ENCODE measurements at regions of chr18 and their contacts with region 1.

Region 1: GRCh38 chr18:45967007-45967706 is at the start of gene EPG5:
- DNase-seq: peak; percentile 95 to 97
- H3K4me3 ChIP-seq: peak within 1 kb of the TSS; percentile 70 to 78
- H3K27ac ChIP-seq: peak within 1 kb of the TSS; percentile 62 to 77
- H3K4me1 ChIP-seq: peaks cover 0 to 22% (median 15%) of the 10 kb centered on the region in 4 donors
- H3K27me3 ChIP-seq: no peaks in the 10 kb centered on the region
- CTCF ChIP-seq: no peak

Region 2: DNA sequence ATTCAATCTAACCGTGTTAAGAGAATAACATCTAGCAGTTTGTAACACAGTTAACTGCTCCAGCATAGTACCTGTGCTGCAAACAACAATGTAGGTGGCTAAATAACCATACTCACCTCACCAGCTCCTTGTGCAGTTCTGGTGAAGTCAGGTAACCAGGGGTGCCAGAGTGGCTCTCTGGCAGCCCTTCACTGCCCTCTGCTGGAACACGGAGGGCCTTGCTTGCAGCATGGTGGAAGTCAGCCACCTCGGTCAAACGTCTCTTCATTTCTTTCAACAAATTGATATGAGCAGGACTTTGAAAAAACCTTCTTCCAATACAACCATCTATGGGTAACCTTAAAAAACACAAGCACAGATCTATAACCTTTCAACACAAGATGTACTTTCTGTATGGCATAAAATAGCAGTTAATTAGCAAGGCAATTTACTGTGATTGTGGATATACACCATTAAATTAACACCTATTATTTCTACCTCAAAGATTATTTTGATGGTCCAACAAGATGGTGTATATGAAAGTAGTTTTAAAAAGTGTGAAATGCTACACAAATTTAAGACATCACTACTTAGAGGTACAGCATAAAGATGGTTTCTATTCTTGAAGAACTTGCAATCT is 56.6 kb before region 1 on chr18:
- intact Hi-C with region 1: no loop called
- DNase-seq: no peak
- H3K4me3 ChIP-seq: no peak overlapping the region
- H3K27ac ChIP-seq: no peak overlapping the region
- H3K4me1 ChIP-seq: no peaks in the 10 kb centered on the region
- H3K27me3 ChIP-seq: no peaks in the 10 kb centered on the region
- CTCF ChIP-seq: peak; percentile 47 to 68

Region 3: DNA sequence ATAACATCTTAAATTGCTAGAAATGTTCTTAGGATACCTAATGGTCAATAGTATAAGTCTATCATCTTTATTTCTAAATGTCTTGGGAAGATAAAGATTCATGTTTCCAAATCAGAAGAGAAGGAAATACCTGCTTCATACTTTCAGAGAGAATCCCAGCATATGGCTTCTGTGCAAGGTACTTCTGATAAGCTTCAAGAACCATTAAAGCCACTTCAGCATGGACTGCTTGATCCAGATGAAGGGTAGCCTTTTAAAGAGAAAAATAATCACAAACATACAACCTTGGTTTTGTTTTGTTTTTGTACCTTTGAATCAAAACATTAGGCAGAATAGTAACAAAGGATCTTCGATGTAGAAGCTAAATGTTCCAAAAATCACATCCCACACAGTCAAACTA is 44.0 kb before region 1 on chr18:
- intact Hi-C with region 1: no loop called
- DNase-seq: no peak
- H3K4me3 ChIP-seq: no peak overlapping the region
- H3K27ac ChIP-seq: no peak overlapping the region
- H3K4me1 ChIP-seq: peaks cover 0 to 10% (median 7%) of the 10 kb centered on the region in 4 donors
- H3K27me3 ChIP-seq: no peaks in the 10 kb centered on the region
- CTCF ChIP-seq: no peak

Region 4: GRCh38 chr18:46073474-46074331 is 106.5 kb after region 1 on chr18:
- intact Hi-C with region 1: loop called (anchors 10 kb)
- DNase-seq: no peak
- H3K4me3 ChIP-seq: no peak overlapping the region
- H3K27ac ChIP-seq: no peak overlapping the region
- H3K4me1 ChIP-seq: peaks cover 0 to 33% (median 19%) of the 10 kb centered on the region in 4 donors
- H3K27me3 ChIP-seq: no peaks in the 10 kb centered on the region
- CTCF ChIP-seq: peak; percentile 55 to 68

Region 5: DNA sequence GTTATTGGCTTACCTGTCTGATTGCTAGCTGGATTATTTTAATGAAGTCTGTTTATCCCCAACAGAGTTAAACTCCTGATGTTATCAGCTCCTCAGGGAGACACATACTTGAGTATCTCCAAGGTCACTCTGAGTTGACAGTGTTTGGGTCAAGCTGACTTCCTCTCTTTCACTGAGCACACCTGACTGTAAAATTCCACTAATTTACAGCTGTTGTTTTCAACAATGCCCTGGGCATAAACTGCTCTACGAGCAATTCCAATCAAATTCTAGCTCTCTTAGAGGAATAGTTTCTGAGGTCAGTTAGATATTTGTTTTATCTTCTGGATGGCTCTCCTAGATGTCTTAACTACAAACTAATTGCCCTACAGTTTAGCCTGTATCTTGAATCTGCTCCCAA is 146.7 kb after region 1 on chr18:
- intact Hi-C with region 1: no loop called
- DNase-seq: no peak
- H3K4me3 ChIP-seq: no peak overlapping the region
- H3K27ac ChIP-seq: no peak overlapping the region
- H3K4me1 ChIP-seq: no peaks in the 10 kb centered on the region
- H3K27me3 ChIP-seq: no peaks in the 10 kb centered on the region
- CTCF ChIP-seq: no peak

Measured in tibial artery (tissue), 4 donors.